Left colon (tissue), 2 donors: ENCODE measurements at regions of chr1 and their contacts with region 1.

Region 1: GRCh38 chr1:43414634-43415223 is 25.0 kb downstream of the SZT2 start:
- DNase-seq: peak in 1 of 2 donors; percentile 70
- ATAC-seq: peak; percentile 83

Region 2: DNA sequence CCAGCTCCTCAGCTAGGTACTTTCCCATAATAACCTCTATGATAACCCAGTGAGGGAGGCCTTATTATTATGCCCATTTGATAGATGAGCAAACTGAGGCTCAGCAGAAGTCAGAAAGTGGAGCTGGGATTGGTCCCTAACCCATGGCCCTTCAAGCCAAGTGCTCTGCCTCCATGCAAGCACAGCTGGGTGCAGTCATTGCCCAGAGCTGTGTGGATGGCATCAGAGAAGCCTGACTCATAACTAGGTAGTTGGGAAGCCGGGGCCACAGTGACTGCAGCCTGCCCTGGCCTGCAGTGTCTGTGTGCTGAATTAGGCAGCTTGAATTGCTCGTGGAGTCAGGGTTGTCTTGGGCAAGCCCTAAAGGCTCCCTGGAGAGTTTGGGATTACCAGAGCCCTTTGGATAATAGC is 366.1 kb before region 1 on chr1:
- intact Hi-C with region 1: no loop called
- DNase-seq: no peak
- ATAC-seq: no peak

Region 3: GRCh38 chr1:43220905-43221778 is 193.6 kb before region 1 on chr1:
- intact Hi-C with region 1: loop called in 1 of 2 experiments (anchors 5 kb)
- DNase-seq: no peak
- ATAC-seq: no peak

Region 4: GRCh38 chr1:43241413-43241836 is 173.3 kb before region 1 on chr1:
- intact Hi-C with region 1: loop called in 1 of 2 experiments (anchors 10 kb)
- DNase-seq: no peak
- ATAC-seq: no peak

Region 5: DNA sequence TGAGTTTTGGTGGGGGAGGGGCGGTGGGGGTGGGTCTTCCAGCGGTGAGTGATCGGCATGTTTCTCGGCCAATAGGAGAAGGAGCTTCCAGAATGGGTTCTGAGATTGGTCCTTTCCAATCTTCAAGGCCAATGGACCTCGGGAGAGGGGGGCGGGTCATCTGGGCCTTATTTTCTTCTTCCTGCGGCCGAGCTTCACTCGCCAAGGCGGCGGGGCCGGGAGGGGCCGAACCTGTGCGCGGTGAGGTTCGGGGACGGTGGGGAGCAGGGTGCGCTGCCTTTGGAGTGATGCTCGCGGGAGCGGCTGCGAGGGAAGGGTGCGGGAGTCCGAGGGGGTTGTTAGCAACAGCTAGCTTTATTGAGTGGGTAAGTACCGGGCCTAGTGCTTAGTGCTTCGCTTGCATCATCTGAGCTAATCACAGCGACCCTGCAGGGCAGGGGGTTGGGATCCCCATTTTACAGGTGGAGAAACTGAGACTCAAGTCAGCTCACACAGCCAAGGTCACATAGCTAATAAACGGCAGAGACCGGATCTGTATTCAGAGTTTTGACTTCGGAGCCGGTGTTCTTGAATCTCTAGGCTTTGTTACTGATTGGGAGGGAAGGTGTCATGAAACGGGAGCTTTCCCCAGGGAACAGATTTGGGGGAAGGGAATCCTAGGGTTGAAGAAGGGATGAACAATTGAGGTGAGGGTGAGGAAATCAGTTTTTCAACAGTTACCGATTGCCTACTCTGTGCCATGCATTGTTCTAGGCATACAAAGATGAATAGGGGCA is 235.8 kb after region 1 on chr1:
- intact Hi-C with region 1: no loop called
- DNase-seq: peak; percentile 97 to 98
- ATAC-seq: peak; percentile 76